CD8-positive, alpha-beta memory T cell (primary cell): ENCODE measurements at regions of chr1 and their contacts with region 1.

Region 1: GRCh38 chr1:145858894-145859490 is at the start of gene PIAS3:
- DNase-seq: peak; percentile 74 to 86 (median 80)
- H3K4me3 ChIP-seq: peak within 1 kb of the TSS; percentile 80
- H3K4me3 Mint-ChIP-seq: peak within 1 kb of the TSS; percentile 93 to 99 (median 97)
- H3K27ac ChIP-seq: peak within 1 kb of the TSS; percentile 56
- H3K27ac Mint-ChIP-seq: peak within 1 kb of the TSS; percentile 77 to 96 (median 90)
- H3K4me1 ChIP-seq: peaks cover 13% of the 10 kb centered on the region
- H3K4me1 Mint-ChIP-seq: peaks cover 11 to 29% (median 29%) of the 10 kb centered on the region in 3 donors
- H3K27me3 ChIP-seq: no peaks in the 10 kb centered on the region
- H3K27me3 Mint-ChIP-seq: peaks cover 0 to 1% of the 10 kb centered on the region in 2 donors
- total RNA-seq, gene PIAS3: 16.7 to 18.3 TPM

Region 2: GRCh38 chr1:145777357-145778145 is 81.4 kb before region 1 on chr1:
- CTCF ChIA-PET with region 1: no interaction called
- POLR2A ChIA-PET with region 1: no interaction called
- DNase-seq: no peak
- H3K4me3 ChIP-seq: no peak overlapping the region
- H3K4me3 Mint-ChIP-seq: no peak overlapping the region
- H3K27ac ChIP-seq: no peak overlapping the region
- H3K27ac Mint-ChIP-seq: peak overlapping the region in 2 of 8 donors; percentile 25 to 36
- H3K4me1 ChIP-seq: no peaks in the 10 kb centered on the region
- H3K4me1 Mint-ChIP-seq: peaks cover 14 to 21% (median 17%) of the 10 kb centered on the region in 3 donors
- H3K27me3 ChIP-seq: no peaks in the 10 kb centered on the region
- H3K27me3 Mint-ChIP-seq: no peaks in the 10 kb centered on the region

Region 3: DNA sequence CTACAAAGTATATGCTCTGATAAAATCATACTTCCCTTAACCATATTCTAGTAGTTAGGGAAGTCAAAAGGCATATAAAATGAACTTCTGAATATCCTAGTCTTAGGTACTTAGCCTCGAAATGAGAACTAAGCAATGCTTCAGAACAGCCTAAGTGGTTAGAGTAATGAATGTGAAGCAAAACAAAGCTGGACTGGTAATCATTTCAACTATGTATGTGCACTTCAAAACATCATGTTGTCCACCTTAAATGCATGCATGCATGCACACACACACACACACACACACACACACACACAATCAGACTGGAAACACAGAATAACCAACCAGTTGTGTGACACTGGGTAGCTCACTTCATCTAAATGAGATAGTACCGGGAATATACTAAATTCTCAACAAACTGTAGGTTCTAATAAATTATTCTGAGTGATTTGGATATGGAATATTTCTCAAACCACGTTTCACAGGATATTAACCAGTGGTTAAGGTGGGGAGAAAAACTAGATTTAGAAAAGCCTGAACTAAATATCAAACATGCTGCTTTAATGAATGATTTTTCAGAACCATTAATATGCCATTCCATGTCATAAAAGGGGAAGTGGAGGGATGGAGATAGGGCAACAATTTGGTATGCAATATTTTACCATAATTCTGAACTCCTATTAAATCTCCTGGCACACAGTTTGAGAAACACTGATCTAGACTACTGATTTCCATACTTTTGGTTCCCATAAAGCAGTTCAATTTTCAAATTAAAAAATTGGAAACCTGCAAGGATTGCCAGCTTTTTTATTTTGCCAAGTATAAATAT is 54.6 kb before region 1 on chr1:
- CTCF ChIA-PET with region 1: no interaction called
- POLR2A ChIA-PET with region 1: no interaction called
- DNase-seq: no peak
- H3K4me3 ChIP-seq: no peak overlapping the region
- H3K4me3 Mint-ChIP-seq: no peak overlapping the region
- H3K27ac ChIP-seq: no peak overlapping the region
- H3K27ac Mint-ChIP-seq: peak overlapping the region in 2 of 8 donors; percentile 48 to 70
- H3K4me1 ChIP-seq: peaks cover 10% of the 10 kb centered on the region
- H3K4me1 Mint-ChIP-seq: peaks cover 52 to 75% (median 71%) of the 10 kb centered on the region in 3 donors
- H3K27me3 ChIP-seq: no peaks in the 10 kb centered on the region
- H3K27me3 Mint-ChIP-seq: peaks cover 0 to 2% of the 10 kb centered on the region in 2 donors

Region 4: GRCh38 chr1:145871994-145872924 is 13.3 kb after region 1 on chr1:
- CTCF ChIA-PET with region 1: interaction called, 14 read pairs
- POLR2A ChIA-PET with region 1: interaction called, 25 read pairs
- DNase-seq: peak in 4 of 5 donors; percentile 6 to 56 (median 40)
- H3K4me3 ChIP-seq: peak overlapping the region; percentile 51
- H3K4me3 Mint-ChIP-seq: peak overlapping the region; percentile 74 to 93 (median 84)
- H3K27ac ChIP-seq: no peak overlapping the region
- H3K27ac Mint-ChIP-seq: peak overlapping the region; percentile 9 to 93 (median 82)
- H3K4me1 ChIP-seq: peaks cover 12% of the 10 kb centered on the region
- H3K4me1 Mint-ChIP-seq: peaks cover 16 to 24% (median 21%) of the 10 kb centered on the region in 3 donors
- H3K27me3 ChIP-seq: no peaks in the 10 kb centered on the region
- H3K27me3 Mint-ChIP-seq: peaks cover 4 to 13% of the 10 kb centered on the region in 2 donors

Region 5: DNA sequence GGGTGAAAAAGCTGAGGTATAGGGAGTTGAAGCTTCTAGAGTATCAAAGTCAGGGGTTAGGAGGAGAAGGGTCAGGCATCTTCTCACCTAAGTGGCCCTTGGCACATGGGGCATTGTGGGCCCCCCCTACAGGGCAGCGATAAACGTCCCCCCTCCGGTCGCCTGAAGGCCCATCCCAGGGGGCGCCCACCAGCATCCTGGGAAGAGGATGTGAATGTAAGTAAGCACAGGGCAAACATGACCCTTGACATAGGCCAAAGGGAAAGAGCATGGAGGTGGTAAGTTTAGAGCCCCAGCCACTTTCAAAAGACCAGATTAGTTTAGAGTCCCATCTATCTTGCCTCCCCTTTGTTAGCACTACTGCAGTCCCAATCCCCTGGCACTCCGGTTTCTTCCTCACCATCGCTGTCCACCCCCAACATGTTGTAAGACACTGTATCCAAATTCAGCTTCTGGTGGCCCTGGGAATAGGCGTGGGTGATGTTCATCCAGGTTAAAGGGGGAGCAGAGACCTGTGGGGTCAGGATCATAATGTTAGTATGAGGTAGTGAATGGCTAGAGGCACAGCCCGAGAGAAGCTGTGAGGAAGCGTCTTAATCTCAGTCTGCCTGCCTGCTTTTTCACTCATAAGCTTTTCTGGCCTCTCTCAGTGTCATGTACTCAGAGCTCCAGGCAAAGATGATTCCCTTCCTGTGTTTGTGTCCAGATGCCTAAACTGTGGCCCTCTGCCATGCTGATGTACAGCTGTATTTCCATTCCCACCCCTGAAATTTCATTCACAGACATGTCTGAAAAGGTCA is 48.2 kb after region 1 on chr1:
- CTCF ChIA-PET with region 1: interaction called, 16 read pairs
- POLR2A ChIA-PET with region 1: no interaction called
- DNase-seq: no peak
- H3K4me3 ChIP-seq: no peak overlapping the region
- H3K4me3 Mint-ChIP-seq: no peak overlapping the region
- H3K27ac ChIP-seq: no peak overlapping the region
- H3K27ac Mint-ChIP-seq: no peak overlapping the region
- H3K4me1 ChIP-seq: no peaks in the 10 kb centered on the region
- H3K4me1 Mint-ChIP-seq: peaks cover 4 to 11% (median 6%) of the 10 kb centered on the region in 3 donors
- H3K27me3 ChIP-seq: no peaks in the 10 kb centered on the region
- H3K27me3 Mint-ChIP-seq: peaks cover 0 to 3% of the 10 kb centered on the region in 2 donors

Region 6: DNA sequence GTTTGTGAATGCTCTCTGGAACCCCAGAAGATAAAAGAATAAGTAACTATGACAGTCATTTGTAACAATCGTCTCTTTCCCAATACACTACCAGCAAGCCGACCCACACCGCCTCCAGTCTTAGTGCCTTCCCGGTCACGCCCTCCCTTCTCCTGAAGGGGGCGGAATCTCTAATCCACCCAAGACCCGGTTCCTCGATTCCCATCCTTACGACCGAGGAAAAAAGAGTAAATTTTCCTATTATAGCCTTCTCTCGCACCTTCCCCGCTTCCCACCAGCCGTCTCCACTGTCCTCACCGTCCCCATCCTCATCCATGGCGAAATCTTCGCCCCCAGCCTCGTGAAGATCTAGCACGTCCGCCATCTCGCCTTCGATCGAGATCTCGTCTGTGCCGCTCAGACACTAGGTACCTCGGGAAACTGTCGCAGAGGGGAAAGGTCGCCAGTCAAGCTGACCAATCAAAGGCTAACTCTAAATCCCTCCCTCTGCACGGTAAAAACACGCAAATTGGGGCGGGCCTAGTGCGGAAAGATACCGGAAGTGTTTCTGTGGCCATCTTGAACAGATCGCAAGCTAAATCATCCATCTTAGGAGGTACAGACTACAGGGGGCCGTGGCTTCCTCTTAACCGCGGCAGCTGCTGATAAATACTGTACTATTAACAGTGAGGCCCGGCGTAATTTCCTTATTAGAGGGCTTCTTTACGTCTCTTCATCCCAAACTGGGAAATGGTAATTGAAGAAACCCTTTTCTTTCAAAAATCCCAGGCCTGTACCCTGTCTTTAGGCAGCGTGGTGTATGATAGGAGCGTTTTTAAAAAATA is 68.3 kb after region 1 on chr1 and contains the start of gene RBM8A:
- CTCF ChIA-PET with region 1: interaction called, 8 read pairs
- POLR2A ChIA-PET with region 1: interaction called, 34 read pairs
- DNase-seq: peak; percentile 85 to 97 (median 96)
- H3K4me3 ChIP-seq: peak within 1 kb of the TSS; percentile 89
- H3K4me3 Mint-ChIP-seq: peak within 1 kb of the TSS in 3 of 7 donors; percentile 47 to 84 (median 57)
- H3K27ac ChIP-seq: peak within 1 kb of the TSS; percentile 93
- H3K27ac Mint-ChIP-seq: peak within 1 kb of the TSS in 4 of 8 donors; percentile 74 to 92 (median 82)
- H3K4me1 ChIP-seq: peaks cover 29% of the 10 kb centered on the region
- H3K4me1 Mint-ChIP-seq: peaks cover 10 to 22% (median 20%) of the 10 kb centered on the region in 3 donors
- H3K27me3 ChIP-seq: no peaks in the 10 kb centered on the region
- H3K27me3 Mint-ChIP-seq: no peaks in the 10 kb centered on the region
- total RNA-seq, gene RBM8A: 387 to 397 TPM

Region 7: GRCh38 chr1:146036965-146037646 is 178.1 kb after region 1 on chr1:
- CTCF ChIA-PET with region 1: no interaction called
- POLR2A ChIA-PET with region 1: interaction called, 12 read pairs
- DNase-seq: peak; percentile 48 to 82 (median 79)
- H3K4me3 ChIP-seq: peak overlapping the region; percentile 88
- H3K4me3 Mint-ChIP-seq: peak overlapping the region; percentile 93 to 99 (median 97)
- H3K27ac ChIP-seq: peak overlapping the region; percentile 64
- H3K27ac Mint-ChIP-seq: peak overlapping the region; percentile 94 to 98 (median 96)
- H3K4me1 ChIP-seq: peaks cover 10% of the 10 kb centered on the region
- H3K4me1 Mint-ChIP-seq: peaks cover 37 to 52% (median 43%) of the 10 kb centered on the region in 3 donors
- H3K27me3 ChIP-seq: no peaks in the 10 kb centered on the region
- H3K27me3 Mint-ChIP-seq: peaks cover 3 to 24% of the 10 kb centered on the region in 2 donors